K562 (cell line): ENCODE measurements at regions of chr6 and their contacts with region 1.

Region 1: GRCh38 chr6:144955859-144956258 is 670.7 kb downstream of the UTRN start:
- DNase-seq: no peak
- ATAC-seq: no peak
- H3K4me3 ChIP-seq: no peak overlapping the region
- H3K27ac ChIP-seq: no peak overlapping the region
- H3K4me1 ChIP-seq: no peaks in the 10 kb centered on the region
- H3K27me3 ChIP-seq: no peaks in the 10 kb centered on the region
- CTCF ChIP-seq: no peak
- EP300 ChIP-seq: no peak
- POLR2A ChIP-seq: no peak
- RAD21 ChIP-seq: no peak

Region 2: DNA sequence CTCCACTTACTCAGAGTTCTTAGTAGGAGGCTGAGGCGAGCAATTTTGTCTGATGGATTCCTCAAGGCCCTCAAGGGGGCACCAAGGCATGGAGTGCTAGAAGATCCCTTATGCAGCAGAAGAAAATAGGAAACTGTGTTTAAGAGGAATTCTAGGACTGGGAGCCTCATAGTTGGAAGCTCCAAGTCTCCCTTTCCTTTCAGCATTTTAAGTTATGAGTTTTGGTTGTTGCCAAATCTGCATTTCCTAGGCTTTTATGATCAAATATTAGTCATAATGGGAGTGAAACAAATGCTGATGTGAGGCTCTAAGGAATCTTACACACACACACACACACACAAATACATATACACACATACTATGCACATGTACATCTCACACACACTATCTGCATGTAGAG is 43.3 kb after region 1 on chr6:
- CTCF ChIA-PET with region 1: interaction called, 11 read pairs
- POLR2A ChIA-PET with region 1: no interaction called
- in situ Hi-C with region 1: no loop called
- intact Hi-C with region 1: no loop called
- DNase-seq: no peak
- ATAC-seq: no peak
- H3K4me3 ChIP-seq: no peak overlapping the region
- H3K27ac ChIP-seq: no peak overlapping the region
- H3K4me1 ChIP-seq: no peaks in the 10 kb centered on the region
- H3K27me3 ChIP-seq: no peaks in the 10 kb centered on the region
- CTCF ChIP-seq: no peak
- EP300 ChIP-seq: no peak
- POLR2A ChIP-seq: no peak
- RAD21 ChIP-seq: no peak

Region 3: DNA sequence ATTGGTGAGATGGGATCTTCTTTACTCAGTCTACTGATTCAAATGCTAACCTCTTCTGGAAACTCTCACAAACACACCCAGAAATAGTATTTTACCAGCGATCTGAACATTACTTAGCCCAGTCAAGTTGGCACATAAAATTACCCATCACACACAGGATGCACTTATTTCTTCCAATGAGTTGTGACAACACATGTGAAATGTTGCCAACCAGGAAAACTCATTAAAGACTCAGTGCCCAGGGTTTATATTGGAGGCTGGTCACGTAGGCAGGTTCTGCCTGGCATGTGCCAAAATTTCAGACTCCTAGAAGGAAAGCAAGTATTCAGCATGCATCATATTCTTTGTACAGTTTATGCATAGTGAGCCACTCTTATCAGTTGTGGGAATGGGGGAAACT is 336.2 kb after region 1 on chr6:
- CTCF ChIA-PET with region 1: no interaction called
- POLR2A ChIA-PET with region 1: no interaction called
- in situ Hi-C with region 1: no loop called
- intact Hi-C with region 1: no loop called
- DNase-seq: no peak
- ATAC-seq: no peak
- H3K4me3 ChIP-seq: no peak overlapping the region
- H3K27ac ChIP-seq: no peak overlapping the region
- H3K4me1 ChIP-seq: no peaks in the 10 kb centered on the region
- H3K27me3 ChIP-seq: no peaks in the 10 kb centered on the region
- CTCF ChIP-seq: no peak
- EP300 ChIP-seq: no peak
- POLR2A ChIP-seq: no peak
- RAD21 ChIP-seq: no peak

Region 4: GRCh38 chr6:145360859-145361258 is 405.0 kb after region 1 on chr6:
- CTCF ChIA-PET with region 1: no interaction called
- POLR2A ChIA-PET with region 1: no interaction called
- in situ Hi-C with region 1: no loop called
- intact Hi-C with region 1: no loop called
- DNase-seq: no peak
- ATAC-seq: no peak
- H3K4me3 ChIP-seq: no peak overlapping the region
- H3K27ac ChIP-seq: no peak overlapping the region
- H3K4me1 ChIP-seq: no peaks in the 10 kb centered on the region
- H3K27me3 ChIP-seq: no peaks in the 10 kb centered on the region
- CTCF ChIP-seq: no peak
- EP300 ChIP-seq: no peak
- POLR2A ChIP-seq: no peak
- RAD21 ChIP-seq: no peak